ENCODE measurements at regions of chr5 and their contacts with region 1.

Region 1: GRCh38 chr5:12825163-12825562 is 920.9 kb upstream of the CTNND2 start:
- DNase-seq: no peak
- H3K4me3 Mint-ChIP-seq: no peak overlapping the region
- H3K27ac Mint-ChIP-seq: no peak overlapping the region
- H3K4me1 Mint-ChIP-seq: no peaks in the 10 kb centered on the region
- H3K27me3 Mint-ChIP-seq: no peaks in the 10 kb centered on the region

Region 2: GRCh38 chr5:12385095-12385494 is 440.1 kb before region 1 on chr5:
- CTCF ChIA-PET with region 1: no interaction called
- POLR2A ChIA-PET with region 1: no interaction called
- intact Hi-C with region 1: no loop called
- DNase-seq: no peak
- H3K4me3 Mint-ChIP-seq: no peak overlapping the region
- H3K27ac Mint-ChIP-seq: no peak overlapping the region
- H3K4me1 Mint-ChIP-seq: no peaks in the 10 kb centered on the region
- H3K27me3 Mint-ChIP-seq: no peaks in the 10 kb centered on the region

Region 3: DNA sequence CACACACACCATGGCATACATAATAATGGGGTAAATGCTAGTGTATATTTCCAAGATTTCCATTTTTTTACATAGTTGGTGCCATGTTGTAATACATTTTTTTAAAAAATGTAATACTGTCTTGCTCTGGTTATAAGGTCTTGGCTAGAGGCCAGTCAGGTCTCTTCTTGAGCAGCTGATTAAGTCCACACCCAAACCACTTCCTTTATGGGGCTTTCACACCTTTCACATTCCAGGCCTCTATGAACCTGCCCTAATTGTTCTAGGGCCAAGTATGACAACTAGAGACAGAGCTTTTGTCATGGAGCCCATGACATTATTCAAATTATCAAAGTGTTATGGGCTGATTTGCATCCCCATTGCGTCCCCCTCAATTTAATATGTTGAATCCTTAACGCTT is 425.3 kb before region 1 on chr5:
- CTCF ChIA-PET with region 1: no interaction called
- POLR2A ChIA-PET with region 1: no interaction called
- intact Hi-C with region 1: no loop called
- DNase-seq: no peak
- H3K4me3 Mint-ChIP-seq: no peak overlapping the region
- H3K27ac Mint-ChIP-seq: no peak overlapping the region
- H3K4me1 Mint-ChIP-seq: no peaks in the 10 kb centered on the region
- H3K27me3 Mint-ChIP-seq: no peaks in the 10 kb centered on the region

Region 4: GRCh38 chr5:12805165-12805707 is 19.9 kb before region 1 on chr5:
- CTCF ChIA-PET with region 1: no interaction called
- POLR2A ChIA-PET with region 1: no interaction called
- intact Hi-C with region 1: loop called (anchors 1 kb)
- DNase-seq: no peak
- H3K4me3 Mint-ChIP-seq: no peak overlapping the region
- H3K27ac Mint-ChIP-seq: no peak overlapping the region
- H3K4me1 Mint-ChIP-seq: no peaks in the 10 kb centered on the region
- H3K27me3 Mint-ChIP-seq: no peaks in the 10 kb centered on the region

Region 5: DNA sequence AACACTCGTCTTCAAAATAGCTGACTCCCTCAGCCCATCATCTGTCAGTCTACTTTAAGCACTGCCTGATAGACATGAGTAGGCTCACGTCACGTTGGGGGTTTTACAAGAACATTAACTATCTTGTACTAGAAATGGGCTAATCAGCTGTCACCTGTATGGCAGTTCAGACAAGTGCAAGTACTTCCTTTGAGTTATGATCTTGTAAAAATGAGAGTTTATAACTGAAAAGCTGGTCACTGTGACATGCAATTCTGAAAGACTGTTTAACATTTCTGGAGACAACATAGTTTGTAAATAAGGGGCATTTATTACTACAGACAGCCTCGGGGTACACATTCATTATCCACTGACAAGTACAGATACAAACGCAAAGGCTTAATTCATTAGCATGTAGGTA is 15.9 kb after region 1 on chr5:
- CTCF ChIA-PET with region 1: no interaction called
- POLR2A ChIA-PET with region 1: no interaction called
- intact Hi-C with region 1: no loop called
- DNase-seq: no peak
- H3K4me3 Mint-ChIP-seq: no peak overlapping the region
- H3K27ac Mint-ChIP-seq: no peak overlapping the region
- H3K4me1 Mint-ChIP-seq: no peaks in the 10 kb centered on the region
- H3K27me3 Mint-ChIP-seq: no peaks in the 10 kb centered on the region

Measured in activated CD4-positive, alpha-beta memory T cell treated with anti-CD3 and anti-CD28 coated beads for 36 hours (primary cell).